Left cardiac atrium (tissue), 4 donors: ENCODE measurements at regions of chr2 and their contacts with region 1.

Region 1: GRCh38 chr2:131517106-131517831 is 10.4 kb upstream of the CCDC74A start:
- DNase-seq: no peak
- ATAC-seq: no peak

Region 2: DNA sequence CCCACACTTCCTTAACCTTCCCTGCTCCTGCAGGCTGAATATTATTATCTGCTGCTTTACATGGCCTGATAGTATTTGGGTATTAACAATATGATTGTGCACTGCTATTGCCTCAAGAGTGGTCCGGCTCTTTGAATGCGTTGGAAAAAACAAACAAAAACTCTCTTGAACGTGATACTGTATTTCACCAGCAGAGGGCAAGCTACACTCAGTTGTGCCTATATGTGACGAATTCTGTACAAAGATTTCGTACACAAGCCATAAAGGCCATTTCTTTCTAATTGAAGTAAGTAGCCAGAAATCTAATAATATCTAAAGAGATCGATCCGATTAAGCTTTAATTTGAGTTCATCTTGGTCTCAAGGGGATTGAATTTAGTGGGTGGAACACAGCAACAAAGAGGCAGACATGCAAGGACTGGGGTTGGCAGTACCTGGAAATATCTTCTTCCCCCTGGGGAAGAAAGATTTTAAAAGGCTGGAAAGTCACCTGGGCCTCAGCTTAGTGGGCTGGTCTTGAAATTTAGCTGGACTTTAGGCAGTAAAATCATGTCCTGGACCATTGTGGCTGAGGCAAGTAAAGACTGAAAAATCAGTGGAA is 104.0 kb before region 1 on chr2:
- intact Hi-C with region 1: loop called in 1 of 2 experiments (anchors 10 kb)
- DNase-seq: no peak
- ATAC-seq: peak; percentile 53 to 59

Region 3: GRCh38 chr2:131425231-131425941 is 91.9 kb before region 1 on chr2:
- intact Hi-C with region 1: no loop called
- DNase-seq: no peak
- ATAC-seq: peak in 1 of 2 donors; percentile 19

Region 4: GRCh38 chr2:131646669-131647297 is 129.5 kb after region 1 on chr2:
- intact Hi-C with region 1: no loop called
- DNase-seq: no peak
- ATAC-seq: no peak